Activated naive CD8-positive, alpha-beta T cell treated with anti-CD3 and anti-CD28 coated beads, Interleukin-2, amount 10 ng/mL, durations not matched to agents 7 days and 5 days (primary cell): ENCODE measurements at regions of chr4 and their contacts with region 1.

Region 1: DNA sequence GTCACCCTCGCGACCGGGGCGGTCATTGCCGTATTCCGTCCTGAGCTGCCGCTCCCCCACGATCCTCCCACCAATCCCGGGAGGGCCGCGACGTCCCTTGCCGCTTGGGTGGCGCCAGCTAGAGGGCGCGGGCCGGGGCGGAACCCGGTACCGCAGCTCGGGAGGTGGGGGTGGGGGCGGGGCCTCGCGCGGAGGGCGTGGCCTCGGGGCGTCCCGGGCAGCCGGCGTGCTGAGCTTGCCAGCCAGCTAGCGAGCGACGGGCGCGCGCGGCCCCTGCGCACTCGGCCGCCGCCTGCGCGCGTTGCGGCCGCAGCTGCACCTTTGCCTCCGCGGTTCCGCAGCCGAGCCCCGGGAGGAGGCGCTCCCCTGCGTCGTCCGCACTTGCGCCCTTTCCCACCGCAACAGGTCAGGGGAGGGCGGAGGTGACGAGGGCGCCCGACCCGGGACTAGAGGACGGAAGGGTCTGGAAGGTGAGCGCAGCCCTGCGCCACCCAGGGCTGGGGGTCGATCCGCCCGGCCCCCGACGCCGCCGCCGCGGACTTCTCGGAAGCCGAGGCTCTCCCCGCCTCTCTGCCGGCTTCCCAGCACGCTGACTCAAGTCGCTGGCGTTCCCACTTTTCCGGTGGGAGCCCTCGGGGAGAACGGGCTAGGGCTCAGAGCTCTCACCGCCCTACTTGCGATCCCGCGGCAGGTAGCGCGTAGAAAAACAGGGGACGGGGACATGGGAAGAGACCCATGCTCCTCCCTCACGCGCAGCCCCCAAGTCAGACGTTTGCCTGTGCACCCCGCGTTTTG is at the start of gene AFF1:
- DNase-seq: peak; percentile 88
- ATAC-seq: peak; percentile 80
- H3K4me3 Mint-ChIP-seq: peak within 1 kb of the TSS; percentile 91
- H3K27ac Mint-ChIP-seq: peak within 1 kb of the TSS; percentile 92
- H3K4me1 Mint-ChIP-seq: peaks cover 35% of the 10 kb centered on the region
- H3K27me3 Mint-ChIP-seq: no peaks in the 10 kb centered on the region
- total RNA-seq, gene AFF1: 57.1 to 62.5 TPM

Region 2: DNA sequence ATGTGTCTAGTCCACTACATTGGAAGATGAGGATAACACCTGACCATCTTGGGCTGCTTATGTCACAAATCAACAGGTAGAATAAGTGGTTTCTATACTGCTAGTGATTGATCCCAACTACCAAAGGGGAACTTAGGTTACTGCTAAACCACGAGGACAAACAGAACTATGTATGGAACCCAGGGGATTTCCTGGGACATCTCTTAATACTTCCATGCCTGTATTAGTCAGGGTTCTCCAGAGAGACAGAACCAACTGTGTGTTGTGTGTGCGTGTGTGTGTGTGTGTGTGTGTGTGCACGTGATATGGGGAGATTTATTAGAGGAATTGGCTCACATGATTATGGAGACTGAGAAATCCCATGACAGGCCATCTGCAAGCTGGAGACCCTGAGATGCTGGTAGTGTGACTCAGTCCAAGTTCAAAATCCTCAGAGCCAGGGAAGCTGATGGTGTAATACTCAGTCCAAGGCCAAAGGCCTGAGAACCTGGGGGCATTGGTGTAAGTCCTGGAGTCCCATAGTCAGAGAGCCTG is 16.4 kb before region 1 on chr4:
- POLR2A ChIA-PET with region 1: interaction called, 10 read pairs
- DNase-seq: no peak
- ATAC-seq: no peak
- H3K4me3 Mint-ChIP-seq: no peak overlapping the region
- H3K27ac Mint-ChIP-seq: no peak overlapping the region
- H3K4me1 Mint-ChIP-seq: peaks cover 12% of the 10 kb centered on the region
- H3K27me3 Mint-ChIP-seq: no peaks in the 10 kb centered on the region

Region 3: GRCh38 chr4:87103691-87104187 is 168.8 kb after region 1 on chr4:
- POLR2A ChIA-PET with region 1: no interaction called
- DNase-seq: no peak
- ATAC-seq: peak; percentile 36
- H3K4me3 Mint-ChIP-seq: no peak overlapping the region
- H3K27ac Mint-ChIP-seq: peak overlapping the region; percentile 3
- H3K4me1 Mint-ChIP-seq: peaks cover 15% of the 10 kb centered on the region
- H3K27me3 Mint-ChIP-seq: no peaks in the 10 kb centered on the region